GM10248 (cell line): ENCODE measurements at regions of chr2 and their contacts with region 1.

Region 1: DNA sequence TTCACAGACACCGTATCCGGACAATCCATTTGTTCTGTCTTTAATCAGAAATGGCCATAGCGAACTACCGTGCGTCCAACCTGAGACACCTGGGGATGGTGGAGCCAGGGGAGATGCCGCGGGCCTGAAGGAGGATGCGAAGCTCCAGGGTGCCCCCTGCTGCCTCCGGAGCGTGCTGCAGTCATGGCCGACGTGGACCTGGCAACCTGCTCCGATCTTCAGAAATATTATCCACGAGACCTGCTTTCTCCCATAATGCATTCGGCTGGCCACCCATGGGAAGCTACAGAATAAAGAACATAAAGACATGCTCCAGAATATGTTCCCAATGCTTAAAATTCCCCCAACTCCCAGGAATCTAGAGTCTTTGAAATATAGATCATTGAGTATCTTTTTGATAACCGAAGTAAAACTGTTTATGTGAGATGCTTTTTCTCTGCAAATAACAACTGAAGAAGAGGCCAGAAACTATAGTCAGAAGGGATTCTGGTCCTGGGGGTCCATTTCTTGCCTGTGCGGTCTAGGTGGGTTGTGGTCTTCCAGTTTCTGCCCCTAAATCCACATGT is 30.7 kb upstream of the SLC66A3 start:
- DNase-seq: peak; percentile 79
- CTCF ChIP-seq: peak; percentile 80

Region 2: GRCh38 chr2:10844097-10844496 is 280.5 kb before region 1 on chr2:
- CTCF ChIA-PET with region 1: interaction called, 10 read pairs
- POLR2A ChIA-PET with region 1: no interaction called
- DNase-seq: no peak
- CTCF ChIP-seq: no peak

Region 3: DNA sequence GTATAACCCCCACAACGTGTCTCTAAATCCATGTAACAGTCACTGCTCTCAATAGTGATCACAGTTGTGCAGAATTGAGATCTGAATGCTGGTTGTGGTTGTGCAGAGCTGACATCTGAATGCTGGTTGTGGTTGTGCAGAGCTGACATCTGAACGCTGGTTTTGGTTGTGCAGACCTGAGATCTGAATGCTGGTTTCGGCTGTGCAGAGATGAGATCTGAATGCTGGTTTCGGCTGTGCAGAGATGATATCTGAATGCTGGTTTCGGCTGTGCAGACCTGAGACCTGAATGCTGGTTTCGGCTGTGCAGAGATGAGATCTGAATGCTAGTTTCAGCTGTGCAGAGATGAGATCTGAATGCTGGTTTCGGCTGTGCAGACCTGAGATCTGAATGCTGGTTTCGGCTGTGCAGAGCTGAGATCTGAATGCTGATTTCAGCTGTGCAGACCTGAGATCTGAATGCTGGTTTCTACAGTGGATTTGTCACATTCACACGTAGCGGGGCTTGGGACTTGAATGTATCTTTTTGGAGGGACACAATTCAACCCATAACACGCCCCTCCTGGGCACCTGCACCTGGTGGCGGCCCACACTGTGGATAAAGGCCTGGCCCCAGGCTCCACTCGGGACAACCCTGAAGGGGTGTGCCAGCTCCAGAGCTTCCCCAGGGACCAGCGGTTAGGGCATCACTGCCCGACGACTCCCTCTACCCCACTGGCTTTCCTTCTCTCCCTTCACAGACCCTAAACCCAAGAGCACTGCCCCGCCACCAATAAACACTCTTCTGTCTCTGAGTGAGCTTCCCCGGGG is 20.4 kb before region 1 on chr2:
- CTCF ChIA-PET with region 1: interaction called, 13 read pairs
- POLR2A ChIA-PET with region 1: no interaction called
- DNase-seq: peak; percentile 41
- CTCF ChIP-seq: peak; percentile 55